AG04450 (cell line): ENCODE measurements at regions of chr17 and their contacts with region 1.

Region 1: DNA sequence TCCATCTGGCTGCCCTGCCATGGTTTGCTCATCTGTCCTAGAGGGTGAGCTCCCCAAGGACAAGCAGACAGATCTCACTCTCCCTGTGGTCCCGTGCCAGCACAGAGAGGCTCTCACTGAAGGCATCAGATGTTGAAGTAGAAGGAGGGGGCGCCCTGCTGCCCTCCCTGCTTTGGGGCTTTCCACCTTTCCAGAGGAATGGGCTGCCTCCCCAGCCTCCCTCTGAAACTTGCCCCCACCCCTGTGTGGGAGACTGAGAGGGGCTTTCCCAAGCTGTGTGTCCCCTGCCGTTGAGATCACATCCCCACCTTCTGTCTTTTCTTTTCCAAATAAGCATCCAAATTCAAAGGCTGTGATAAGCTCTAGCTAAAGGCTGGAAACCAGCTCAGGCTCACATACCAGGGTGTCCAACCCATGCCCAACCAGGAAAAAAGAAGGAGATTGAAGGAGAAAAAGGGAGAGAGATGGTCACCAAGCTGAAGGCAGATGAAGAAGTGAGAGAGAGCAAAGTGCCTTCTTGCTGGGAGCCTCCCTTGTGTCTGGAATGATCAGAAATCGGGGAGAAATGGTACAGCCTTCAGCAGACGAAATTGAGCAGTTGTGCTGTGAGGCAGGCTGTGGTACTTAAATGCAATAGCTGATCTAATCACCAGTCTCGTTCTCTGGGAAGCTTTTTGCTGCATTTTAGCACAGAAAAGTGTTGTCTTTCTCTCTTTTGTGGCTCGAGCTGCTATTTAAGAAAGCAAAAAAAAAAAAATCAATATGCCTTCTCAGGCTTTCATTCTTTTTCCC is 145.9 kb upstream of the LHX1 start:
- DNase-seq: no peak
- H3K4me3 ChIP-seq: no peak overlapping the region
- H3K27ac ChIP-seq: no peak overlapping the region
- H3K27me3 ChIP-seq: peaks cover 18% of the 10 kb centered on the region
- CTCF ChIP-seq: no peak

Region 2: DNA sequence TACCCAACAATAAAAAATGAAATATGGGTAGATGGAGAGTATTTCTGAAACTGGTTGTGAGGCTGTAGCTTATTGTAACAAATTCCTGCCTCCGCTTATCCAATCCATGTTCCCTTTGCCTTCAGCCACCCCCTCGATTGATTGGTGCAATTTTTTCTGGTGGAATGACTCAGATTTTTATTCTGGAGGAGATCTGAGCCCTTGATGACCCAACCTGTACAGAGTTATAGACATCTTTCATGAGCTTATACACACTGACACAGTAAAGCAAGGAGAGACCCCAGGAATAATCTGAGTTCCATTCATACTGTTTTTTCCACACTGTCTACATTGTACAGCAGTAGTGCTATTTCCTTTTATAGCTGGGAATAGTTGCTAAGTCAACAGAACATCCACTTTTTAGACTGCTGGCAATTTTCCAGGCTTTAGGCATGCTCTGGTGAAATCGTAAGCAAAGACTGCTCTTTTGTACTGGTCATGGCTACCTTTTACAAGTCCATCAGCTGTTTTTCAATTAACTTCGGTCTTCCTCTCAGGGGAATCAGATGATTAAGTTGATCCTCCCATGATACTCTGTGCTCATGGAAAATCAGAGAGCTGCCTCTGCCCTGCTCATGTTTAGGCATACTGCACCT is 657.6 kb before region 1 on chr17:
- CTCF ChIA-PET with region 1: interaction called, 10 read pairs
- POLR2A ChIA-PET with region 1: no interaction called
- DNase-seq: no peak
- H3K4me3 ChIP-seq: no peak overlapping the region
- H3K27ac ChIP-seq: no peak overlapping the region
- H3K27me3 ChIP-seq: no peaks in the 10 kb centered on the region
- CTCF ChIP-seq: no peak

Region 3: GRCh38 chr17:36808181-36808661 is 16.9 kb after region 1 on chr17:
- CTCF ChIA-PET with region 1: no interaction called
- POLR2A ChIA-PET with region 1: no interaction called
- DNase-seq: no peak
- H3K4me3 ChIP-seq: no peak overlapping the region
- H3K27ac ChIP-seq: no peak overlapping the region
- H3K27me3 ChIP-seq: peaks cover 63% of the 10 kb centered on the region
- CTCF ChIP-seq: no peak